ENCODE measurements at regions of chr17 and their contacts with region 1.

Region 1: GRCh38 chr17:68200689-68201417 is 47.0 kb upstream of the AMZ2 start:
- DNase-seq: peak; percentile 13
- H3K4me3 ChIP-seq: peak overlapping the region; percentile 41
- H3K27ac ChIP-seq: no peak overlapping the region
- H3K27me3 ChIP-seq: peaks cover 44% of the 10 kb centered on the region
- CTCF ChIP-seq: peak; percentile 85

Region 2: GRCh38 chr17:67546578-67547527 is 654.0 kb before region 1 on chr17:
- CTCF ChIA-PET with region 1: no interaction called
- POLR2A ChIA-PET with region 1: no interaction called
- DNase-seq: no peak
- H3K4me3 ChIP-seq: no peak overlapping the region
- H3K27ac ChIP-seq: no peak overlapping the region
- H3K27me3 ChIP-seq: no peaks in the 10 kb centered on the region
- CTCF ChIP-seq: peak; percentile 34

Region 3: DNA sequence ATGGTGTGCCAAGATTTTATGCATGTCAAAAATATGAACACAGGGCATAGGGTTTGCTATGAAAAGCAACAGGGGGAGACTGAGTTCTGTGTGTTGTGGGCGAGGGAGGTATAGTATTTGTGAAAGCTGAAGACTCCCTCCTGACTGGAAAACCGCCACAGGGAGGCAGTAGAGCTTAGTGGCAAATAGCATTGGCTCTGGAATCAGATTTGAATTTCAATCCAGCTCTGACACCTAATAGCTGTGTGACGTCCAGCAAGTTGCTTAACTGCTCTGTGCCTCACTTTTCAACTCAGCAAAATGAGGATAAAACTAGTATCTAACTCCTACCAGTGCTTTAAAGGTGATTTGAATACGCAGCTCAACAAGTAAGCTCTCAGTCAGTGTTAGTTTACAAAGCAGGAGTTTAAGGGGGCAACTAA is 143.3 kb before region 1 on chr17:
- CTCF ChIA-PET with region 1: interaction called, 11 read pairs
- POLR2A ChIA-PET with region 1: no interaction called
- DNase-seq: no peak
- H3K4me3 ChIP-seq: no peak overlapping the region
- H3K27ac ChIP-seq: no peak overlapping the region
- H3K27me3 ChIP-seq: no peaks in the 10 kb centered on the region
- CTCF ChIP-seq: peak; percentile 60

Region 4: DNA sequence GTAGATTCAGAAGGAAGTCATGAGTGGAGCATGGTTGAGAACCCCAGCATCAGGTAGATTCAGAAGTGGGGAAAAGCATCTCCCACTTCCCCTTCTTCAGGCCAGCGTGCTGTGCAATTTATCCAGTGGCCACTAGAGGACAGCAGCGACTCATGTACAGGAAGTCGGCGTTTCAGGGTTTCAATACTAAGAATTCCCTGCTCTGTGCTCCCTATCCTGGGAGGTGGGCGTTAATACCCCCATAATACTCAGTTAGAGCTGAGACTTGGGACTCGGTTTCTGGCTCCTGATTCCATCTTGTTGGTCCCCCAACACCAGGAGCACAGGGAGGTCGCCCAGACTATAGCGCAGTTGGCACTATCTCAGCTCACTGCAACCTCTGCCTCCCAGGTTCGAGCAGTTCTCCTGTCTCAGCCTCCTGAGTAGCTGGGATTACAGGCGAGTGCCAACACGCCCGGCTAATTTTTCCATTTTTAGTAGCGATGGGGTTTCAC is 28.3 kb before region 1 on chr17:
- CTCF ChIA-PET with region 1: interaction called, 44 read pairs
- POLR2A ChIA-PET with region 1: no interaction called
- DNase-seq: no peak
- H3K4me3 ChIP-seq: no peak overlapping the region
- H3K27ac ChIP-seq: no peak overlapping the region
- H3K27me3 ChIP-seq: no peaks in the 10 kb centered on the region
- CTCF ChIP-seq: peak; percentile 95

Region 5: DNA sequence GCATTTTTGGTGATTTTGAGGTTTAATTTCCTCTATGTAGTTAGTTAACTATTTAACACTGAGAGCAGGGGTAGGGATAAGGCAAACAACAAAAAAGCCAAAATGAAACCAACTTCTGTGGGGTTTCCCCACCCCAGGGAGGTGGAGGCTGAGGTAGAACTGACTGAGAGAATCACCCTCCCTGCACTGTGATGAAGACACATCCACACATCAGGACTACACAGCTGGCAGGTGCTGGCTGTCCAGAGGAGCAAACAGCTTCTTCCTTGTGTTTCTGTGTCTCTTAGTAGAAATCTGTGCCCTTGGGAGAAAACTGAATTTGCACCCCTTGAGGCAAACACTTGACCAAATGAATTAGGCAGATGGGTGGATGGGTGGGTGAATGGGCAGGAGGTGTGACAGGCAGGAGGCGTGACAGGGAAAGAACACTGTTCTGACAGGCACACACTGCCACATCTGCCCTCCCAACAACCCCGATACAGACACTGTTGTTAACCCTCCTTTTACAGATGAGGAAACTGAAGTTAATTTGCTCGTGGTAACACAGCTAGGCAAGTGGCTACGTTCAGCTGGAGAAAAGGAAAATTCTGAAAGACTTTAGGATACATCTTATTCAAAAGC is 15.9 kb before region 1 on chr17:
- CTCF ChIA-PET with region 1: interaction called, 14 read pairs
- POLR2A ChIA-PET with region 1: no interaction called
- DNase-seq: no peak
- H3K4me3 ChIP-seq: no peak overlapping the region
- H3K27ac ChIP-seq: no peak overlapping the region
- H3K27me3 ChIP-seq: peaks cover 4% of the 10 kb centered on the region
- CTCF ChIP-seq: no peak

Region 6: GRCh38 chr17:68190495-68190894 is 10.4 kb before region 1 on chr17:
- CTCF ChIA-PET with region 1: interaction called, 14 read pairs
- POLR2A ChIA-PET with region 1: no interaction called
- DNase-seq: no peak
- H3K4me3 ChIP-seq: no peak overlapping the region
- H3K27ac ChIP-seq: no peak overlapping the region
- H3K27me3 ChIP-seq: peaks cover 19% of the 10 kb centered on the region
- CTCF ChIP-seq: no peak

Region 7: DNA sequence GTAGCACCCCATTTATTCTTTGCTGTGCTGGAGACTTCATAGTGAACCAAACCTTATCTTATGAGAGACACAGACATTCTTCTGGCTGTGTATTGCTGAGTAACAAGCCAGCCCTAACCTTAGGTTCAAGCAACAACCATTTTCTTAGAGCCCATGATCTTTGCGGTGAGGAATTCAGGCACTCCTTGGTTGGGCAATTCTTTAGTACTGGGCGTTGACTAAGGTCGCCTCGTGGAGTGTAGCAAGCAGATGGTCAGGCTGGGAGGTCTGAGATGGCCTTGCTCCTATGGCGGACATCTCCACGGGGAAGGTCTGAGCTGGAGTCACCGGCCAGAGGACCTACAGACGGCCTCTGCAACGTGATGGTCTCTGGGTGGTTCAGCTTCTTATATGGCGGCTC is 133.5 kb after region 1 on chr17:
- CTCF ChIA-PET with region 1: no interaction called
- POLR2A ChIA-PET with region 1: no interaction called
- DNase-seq: no peak
- H3K4me3 ChIP-seq: no peak overlapping the region
- H3K27ac ChIP-seq: no peak overlapping the region
- H3K27me3 ChIP-seq: no peaks in the 10 kb centered on the region
- CTCF ChIP-seq: no peak